ENCODE measurements at regions of chr10 and their contacts with region 1.

Region 1: DNA sequence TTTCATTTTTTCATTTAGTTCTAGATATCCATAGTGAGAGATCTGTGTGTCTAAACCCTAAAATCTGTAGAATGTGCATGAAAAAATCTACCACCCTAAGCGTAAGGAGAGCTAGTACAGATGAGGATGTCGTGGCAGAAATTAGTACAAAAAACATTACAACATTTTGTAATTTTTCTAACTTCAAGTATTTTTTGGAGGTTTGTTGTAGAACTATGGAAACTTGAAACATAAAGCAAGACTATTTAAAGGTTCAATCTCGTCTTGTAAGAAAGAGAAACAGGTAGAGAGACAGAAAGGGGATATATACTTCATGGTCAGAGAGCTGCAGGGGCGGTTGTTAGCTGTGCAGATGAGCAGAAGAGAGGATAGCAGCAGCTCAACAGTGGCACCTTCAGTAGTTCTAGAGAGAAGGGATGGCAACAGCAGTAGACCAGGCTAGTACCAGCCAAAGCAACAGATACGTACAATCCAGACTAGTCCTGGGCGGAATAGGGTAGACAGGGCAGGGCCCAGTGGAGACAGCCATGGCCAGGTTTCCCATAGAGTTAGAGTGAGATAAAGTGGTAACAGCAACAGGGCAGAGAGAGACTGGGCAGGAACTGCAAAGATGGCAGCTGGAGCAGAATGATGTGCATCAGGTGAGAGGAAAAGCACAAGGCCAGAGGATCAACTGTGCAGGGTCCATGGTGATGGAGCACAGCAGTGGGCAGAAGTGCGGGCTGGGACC is 145.2 kb downstream of the FRMD4A start:
- DNase-seq: peak; percentile 77
- H3K4me3 Mint-ChIP-seq: peak overlapping the region; percentile 74
- H3K27ac Mint-ChIP-seq: peak overlapping the region; percentile 98
- H3K4me1 Mint-ChIP-seq: peaks cover 32% of the 10 kb centered on the region
- H3K27me3 Mint-ChIP-seq: peaks cover 31% of the 10 kb centered on the region

Region 2: DNA sequence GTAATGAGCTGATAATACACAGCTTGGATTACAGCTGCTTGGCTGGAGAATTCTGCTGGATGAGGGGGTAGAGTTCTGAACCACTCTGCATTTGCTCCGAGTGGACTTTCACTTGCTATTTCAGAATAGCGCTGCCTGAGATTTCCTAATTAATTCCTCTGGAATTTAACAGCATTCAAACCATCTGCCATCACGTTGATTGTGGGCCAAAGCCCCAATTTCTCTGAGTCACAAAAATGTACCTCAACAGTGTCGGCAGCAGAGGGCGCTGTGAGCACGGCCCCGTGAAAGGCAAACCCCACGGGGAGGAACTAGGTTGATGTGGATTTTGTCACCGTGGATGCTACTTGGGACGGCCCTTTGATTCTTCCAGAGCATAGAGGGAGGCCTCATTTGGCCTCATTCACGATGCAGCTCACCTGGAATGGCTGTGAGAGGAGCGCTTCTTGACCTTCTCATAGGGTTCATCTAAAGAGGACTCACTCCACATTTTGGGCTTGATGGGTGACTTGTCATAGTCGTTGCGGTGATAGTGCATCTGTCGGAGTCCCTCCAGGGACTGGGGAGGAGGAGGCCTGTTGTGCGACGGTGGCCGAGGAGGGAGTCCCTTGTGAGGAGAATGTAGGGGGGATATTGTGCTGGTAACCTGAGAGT is 525.5 kb before region 1 on chr10:
- CTCF ChIA-PET with region 1: interaction called, 3 read pairs
- POLR2A ChIA-PET with region 1: no interaction called
- intact Hi-C with region 1: loop called (anchors 5 kb)
- DNase-seq: peak; percentile 77
- H3K4me3 Mint-ChIP-seq: no peak overlapping the region
- H3K27ac Mint-ChIP-seq: no peak overlapping the region
- H3K4me1 Mint-ChIP-seq: peaks cover 9% of the 10 kb centered on the region
- H3K27me3 Mint-ChIP-seq: no peaks in the 10 kb centered on the region

Region 3: GRCh38 chr10:13787015-13787421 is 398.5 kb before region 1 on chr10:
- CTCF ChIA-PET with region 1: interaction called, 3 read pairs
- POLR2A ChIA-PET with region 1: interaction called, 13 read pairs
- intact Hi-C with region 1: loop called (anchors 1 kb)
- DNase-seq: peak; percentile 89
- H3K4me3 Mint-ChIP-seq: no peak overlapping the region
- H3K27ac Mint-ChIP-seq: peak overlapping the region; percentile 82
- H3K4me1 Mint-ChIP-seq: peaks cover 31% of the 10 kb centered on the region
- H3K27me3 Mint-ChIP-seq: no peaks in the 10 kb centered on the region

Region 4: DNA sequence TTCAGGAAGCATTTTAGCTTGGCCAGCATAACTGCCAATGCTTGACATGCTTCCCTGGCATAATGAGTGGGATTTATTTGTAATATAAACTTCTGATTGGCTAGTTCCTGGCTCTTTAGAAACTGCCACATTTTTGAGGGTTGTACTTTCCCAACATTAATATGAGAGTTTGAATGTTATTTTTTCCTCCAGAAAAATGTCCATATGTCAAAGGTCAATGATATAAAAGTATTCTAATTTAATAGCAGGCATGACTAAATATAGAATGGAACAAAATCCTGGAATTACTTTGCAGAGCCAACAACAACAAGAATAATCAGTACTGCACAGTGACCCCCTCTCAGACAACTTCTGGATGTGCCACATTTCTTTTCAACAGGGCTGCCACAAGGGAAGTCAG is 246.1 kb before region 1 on chr10:
- CTCF ChIA-PET with region 1: no interaction called
- POLR2A ChIA-PET with region 1: no interaction called
- intact Hi-C with region 1: no loop called
- DNase-seq: no peak
- H3K4me3 Mint-ChIP-seq: no peak overlapping the region
- H3K27ac Mint-ChIP-seq: no peak overlapping the region
- H3K4me1 Mint-ChIP-seq: peaks cover 10% of the 10 kb centered on the region
- H3K27me3 Mint-ChIP-seq: peaks cover 5% of the 10 kb centered on the region

Region 5: DNA sequence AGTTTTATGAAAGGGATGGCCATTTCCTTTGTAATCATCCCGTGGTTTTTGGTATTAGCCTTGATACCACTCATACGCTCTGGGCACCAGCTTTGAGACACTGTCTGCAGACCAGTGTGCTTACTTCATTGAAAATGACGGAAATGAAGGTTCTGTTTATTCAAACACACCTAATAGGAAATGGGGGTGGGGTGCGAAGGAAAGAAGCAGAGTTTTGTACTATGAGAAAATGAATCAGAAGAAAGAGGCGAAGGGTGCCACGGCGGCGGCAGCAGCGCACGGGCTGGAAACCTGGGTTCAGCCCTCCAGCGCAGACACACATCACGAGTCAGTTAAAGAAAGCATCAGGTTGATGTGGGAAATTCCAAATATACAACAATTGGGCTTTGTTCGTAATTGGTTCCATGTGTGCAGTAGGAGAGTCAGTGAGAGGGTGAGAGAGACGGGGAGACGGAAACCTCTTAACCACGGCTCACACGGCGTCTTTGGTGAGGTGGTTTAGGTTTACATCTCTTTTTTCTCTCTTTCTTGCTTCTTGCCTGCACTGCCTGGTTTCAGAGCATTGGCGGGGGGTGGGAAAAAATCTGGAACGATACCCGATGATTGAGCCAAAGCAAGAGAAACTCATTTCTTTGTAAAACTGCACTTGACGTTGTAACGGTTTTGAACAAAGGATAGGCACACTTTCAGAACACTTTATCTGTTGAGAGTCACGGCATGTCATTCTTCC is 175.9 kb before region 1 on chr10:
- CTCF ChIA-PET with region 1: no interaction called
- POLR2A ChIA-PET with region 1: interaction called, 17 read pairs
- intact Hi-C with region 1: loop called (anchors 1 kb)
- DNase-seq: peak; percentile 80
- H3K4me3 Mint-ChIP-seq: peak overlapping the region; percentile 81
- H3K27ac Mint-ChIP-seq: peak overlapping the region; percentile 79
- H3K4me1 Mint-ChIP-seq: peaks cover 27% of the 10 kb centered on the region
- H3K27me3 Mint-ChIP-seq: no peaks in the 10 kb centered on the region

Region 6: DNA sequence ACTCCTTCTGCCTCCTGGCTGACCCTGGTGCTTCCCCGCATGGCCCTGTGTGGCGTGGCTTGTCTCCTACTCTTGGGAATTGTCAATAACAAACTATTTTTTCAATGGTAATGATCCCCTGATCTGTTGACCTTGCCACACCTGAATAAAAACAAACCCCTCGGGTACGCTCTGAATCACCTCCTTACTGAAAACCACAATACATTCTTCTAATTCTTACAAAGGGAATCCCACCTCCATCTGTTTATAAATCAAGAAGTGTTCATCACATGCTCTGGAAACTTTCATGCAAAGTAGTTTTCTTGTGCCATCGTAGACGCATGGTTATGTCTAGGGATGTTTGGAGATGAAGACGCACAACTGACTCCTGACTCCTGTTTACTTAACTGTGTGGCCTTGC is 100.6 kb before region 1 on chr10:
- CTCF ChIA-PET with region 1: no interaction called
- POLR2A ChIA-PET with region 1: no interaction called
- intact Hi-C with region 1: no loop called
- DNase-seq: no peak
- H3K4me3 Mint-ChIP-seq: no peak overlapping the region
- H3K27ac Mint-ChIP-seq: no peak overlapping the region
- H3K4me1 Mint-ChIP-seq: no peaks in the 10 kb centered on the region
- H3K27me3 Mint-ChIP-seq: peaks cover 11% of the 10 kb centered on the region

Region 7: GRCh38 chr10:14146025-14146424 is 39.5 kb before region 1 on chr10:
- CTCF ChIA-PET with region 1: no interaction called
- POLR2A ChIA-PET with region 1: no interaction called
- intact Hi-C with region 1: no loop called
- DNase-seq: no peak
- H3K4me3 Mint-ChIP-seq: no peak overlapping the region
- H3K27ac Mint-ChIP-seq: no peak overlapping the region
- H3K4me1 Mint-ChIP-seq: no peaks in the 10 kb centered on the region
- H3K27me3 Mint-ChIP-seq: peaks cover 28% of the 10 kb centered on the region

Region 8: DNA sequence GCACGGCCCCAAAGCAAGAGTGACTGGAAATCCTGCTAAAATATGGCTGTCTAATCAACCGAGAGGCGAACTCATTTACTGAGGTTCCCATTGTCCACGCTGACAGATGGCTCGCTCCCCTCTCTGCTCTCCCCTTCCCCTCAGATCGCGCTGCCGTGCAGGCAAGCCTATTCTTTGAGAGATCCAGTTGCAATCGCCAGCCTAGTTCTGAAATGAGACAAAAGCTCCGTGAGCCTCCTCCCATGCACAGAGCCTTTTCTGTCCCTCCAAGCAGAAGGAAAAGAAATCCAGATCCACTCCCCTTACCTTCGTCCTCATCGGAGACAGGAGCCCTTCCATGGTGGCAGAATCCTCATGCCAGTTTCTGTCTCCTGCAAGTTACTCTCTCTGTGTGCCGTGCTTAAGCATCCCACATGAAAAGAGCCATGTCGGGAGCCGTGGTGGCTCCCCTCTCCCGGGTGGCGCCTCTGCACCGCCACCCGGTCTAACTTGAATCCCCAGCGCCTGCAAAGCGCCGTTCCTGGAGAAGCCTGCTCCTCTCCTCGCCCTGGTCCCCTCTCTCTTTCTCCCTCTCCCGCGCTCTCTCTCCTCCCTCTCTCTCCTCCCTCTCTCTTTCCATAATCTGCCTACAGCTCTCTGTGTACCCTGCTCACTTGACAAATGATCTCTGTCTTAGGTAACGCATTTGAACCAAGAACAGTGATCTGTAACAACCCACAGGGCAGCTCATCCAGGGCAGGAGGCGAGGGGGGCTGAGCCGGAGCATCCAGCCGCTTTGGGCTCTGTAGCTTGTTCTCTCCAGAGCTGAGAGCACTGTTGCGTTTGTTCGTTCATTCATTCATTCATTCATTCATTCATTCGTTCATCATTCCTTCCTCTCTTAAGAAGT is 11.5 kb before region 1 on chr10:
- CTCF ChIA-PET with region 1: no interaction called
- POLR2A ChIA-PET with region 1: interaction called, 11 read pairs
- intact Hi-C with region 1: no loop called
- DNase-seq: peak; percentile 23
- H3K4me3 Mint-ChIP-seq: peak overlapping the region; percentile 71
- H3K27ac Mint-ChIP-seq: no peak overlapping the region
- H3K4me1 Mint-ChIP-seq: peaks cover 16% of the 10 kb centered on the region
- H3K27me3 Mint-ChIP-seq: peaks cover 55% of the 10 kb centered on the region

Region 9: DNA sequence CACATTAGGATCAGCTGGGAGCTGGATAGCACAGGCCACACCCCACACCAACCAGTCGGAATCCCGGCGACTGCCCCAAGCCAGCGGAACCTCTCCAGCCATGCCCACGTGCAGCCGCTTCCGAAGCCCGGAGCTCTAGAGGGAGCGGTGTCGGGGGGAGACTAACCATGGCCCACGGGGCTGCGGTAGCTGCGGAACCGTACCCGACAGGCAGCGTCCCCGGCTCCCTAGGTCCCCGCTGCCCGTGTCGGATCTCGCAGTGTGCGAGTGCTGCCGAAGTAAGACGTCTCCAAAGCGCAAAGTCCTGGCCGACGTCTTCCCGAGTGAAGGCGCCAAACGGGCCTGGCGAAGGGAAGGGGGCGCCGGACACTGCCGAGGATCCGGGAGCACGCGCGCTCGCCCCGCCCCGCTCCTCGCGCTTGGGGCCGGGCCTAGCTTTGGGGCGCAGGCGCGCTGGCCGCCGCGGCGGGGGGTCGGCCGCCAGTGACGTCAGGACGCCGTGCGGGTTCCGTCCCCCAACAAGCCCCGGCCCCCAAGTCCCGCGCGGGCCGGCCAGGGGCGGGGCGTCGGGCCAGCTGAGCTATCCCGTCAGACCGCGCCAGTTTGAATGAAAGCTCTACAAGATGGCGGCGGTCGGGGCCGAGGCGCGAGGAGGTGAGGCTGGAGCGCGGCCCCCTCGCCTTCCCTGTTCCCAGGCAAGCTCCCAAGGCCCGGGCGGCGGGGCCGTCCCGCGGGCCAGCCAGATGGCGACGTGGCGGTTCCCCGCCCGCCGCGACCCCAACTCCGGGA is 693.0 kb after region 1 on chr10 and contains the start of gene SUV39H2:
- CTCF ChIA-PET with region 1: no interaction called
- POLR2A ChIA-PET with region 1: interaction called, 9 read pairs
- intact Hi-C with region 1: loop called (anchors 1 kb)
- DNase-seq: peak; percentile 96
- H3K4me3 Mint-ChIP-seq: peak within 1 kb of the TSS; percentile 94
- H3K27ac Mint-ChIP-seq: peak within 1 kb of the TSS; percentile 80
- H3K4me1 Mint-ChIP-seq: peaks cover 41% of the 10 kb centered on the region
- H3K27me3 Mint-ChIP-seq: no peaks in the 10 kb centered on the region
- total RNA-seq, gene SUV39H2: 38.7 to 39.8 TPM

Region 10: DNA sequence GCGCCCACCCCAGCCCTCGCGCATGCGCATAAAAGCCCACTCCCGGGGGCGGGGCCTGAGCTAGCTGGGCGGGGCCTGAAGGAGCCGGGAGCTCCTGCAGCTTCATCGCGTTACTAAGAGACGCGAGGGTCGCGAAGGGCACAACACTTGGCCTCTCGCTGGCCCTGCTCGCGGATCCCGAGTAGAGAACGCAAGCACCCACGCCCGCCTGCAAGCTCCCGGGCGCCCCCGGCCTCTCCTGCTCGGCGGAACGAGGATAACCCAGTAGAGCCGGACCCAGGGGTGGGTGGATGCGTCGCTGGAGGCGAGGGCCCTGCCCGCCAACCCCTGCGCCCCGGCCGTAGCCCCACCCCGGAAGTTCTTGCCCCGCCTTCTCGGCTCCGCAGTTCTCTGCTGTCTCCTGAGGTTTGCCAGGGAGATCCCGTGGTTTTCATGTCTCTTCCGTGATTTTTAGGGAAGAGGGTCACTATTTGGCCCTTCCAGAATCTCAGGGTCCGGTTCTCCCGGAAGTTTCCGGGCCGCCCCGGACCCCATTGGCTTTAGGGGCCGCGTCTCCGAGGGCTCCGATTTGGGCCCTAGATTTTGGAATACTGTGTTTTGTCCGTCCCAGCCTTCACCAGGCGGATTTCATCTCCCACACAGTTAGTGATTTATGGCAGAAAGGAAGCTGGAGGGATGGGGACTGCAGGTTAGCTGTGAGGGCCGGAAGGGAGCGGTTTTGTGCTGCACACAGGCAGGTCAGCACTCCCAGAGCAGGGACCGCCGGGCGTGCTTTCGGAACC is 774.0 kb after region 1 on chr10 and contains the start of gene MEIG1:
- CTCF ChIA-PET with region 1: no interaction called
- POLR2A ChIA-PET with region 1: interaction called, 4 read pairs
- intact Hi-C with region 1: loop called (anchors 10 kb)
- DNase-seq: peak; percentile 95
- H3K4me3 Mint-ChIP-seq: peak within 1 kb of the TSS; percentile 88
- H3K27ac Mint-ChIP-seq: peak within 1 kb of the TSS; percentile 95
- H3K4me1 Mint-ChIP-seq: peaks cover 24% of the 10 kb centered on the region
- H3K27me3 Mint-ChIP-seq: no peaks in the 10 kb centered on the region
- total RNA-seq, gene MEIG1: 0.95 to 1.4 TPM

Measured in activated CD4-positive, alpha-beta memory T cell treated with anti-CD3 and anti-CD28 coated beads for 36 hours (primary cell).